AG04450 (cell line): ENCODE measurements at regions of chr4 and their contacts with region 1.

Region 1: DNA sequence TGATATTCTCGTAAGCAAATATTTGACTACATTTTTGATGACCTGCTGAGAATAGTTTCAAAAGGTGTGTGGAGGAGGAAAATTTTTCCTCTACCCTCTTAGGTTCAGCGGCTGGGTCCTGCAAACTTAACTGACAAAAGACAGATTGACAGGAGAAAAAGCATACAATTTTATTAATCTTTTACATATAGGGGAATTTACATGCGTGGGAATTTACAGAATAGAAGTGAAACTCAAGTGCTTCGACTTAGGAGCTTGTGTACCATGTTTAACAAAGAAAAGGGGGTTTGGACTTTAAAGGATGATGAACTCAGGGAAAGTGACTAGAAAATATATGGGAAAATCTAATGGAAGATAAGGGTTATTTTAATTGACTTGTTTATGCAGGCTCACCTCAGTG is 2.5 kb downstream of the HERC6 start:
- DNase-seq: no peak
- H3K4me3 ChIP-seq: no peak overlapping the region
- H3K27ac ChIP-seq: no peak overlapping the region
- H3K27me3 ChIP-seq: peaks cover 3% of the 10 kb centered on the region
- CTCF ChIP-seq: no peak

Region 2: DNA sequence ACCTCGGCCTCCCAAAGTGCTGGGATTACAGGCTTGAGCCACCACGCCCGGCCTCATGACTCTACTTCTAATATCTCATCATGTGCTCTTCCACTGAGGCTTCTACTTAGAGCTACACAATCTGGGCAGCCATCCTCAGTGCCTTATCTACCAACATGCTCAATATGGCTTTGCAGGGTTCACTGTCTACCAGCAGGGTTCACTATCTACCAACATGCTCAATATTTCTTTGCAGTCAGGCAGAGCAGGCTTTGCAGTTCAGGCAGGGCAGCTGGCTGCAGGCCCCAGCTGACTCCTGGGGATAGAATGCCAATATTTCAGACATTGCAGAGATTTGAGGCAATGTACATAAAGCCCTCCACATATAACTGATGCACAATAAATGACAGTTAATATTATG is 326.2 kb before region 1 on chr4:
- CTCF ChIA-PET with region 1: no interaction called
- POLR2A ChIA-PET with region 1: no interaction called
- DNase-seq: peak; percentile 38
- H3K4me3 ChIP-seq: no peak overlapping the region
- H3K27ac ChIP-seq: no peak overlapping the region
- H3K27me3 ChIP-seq: no peaks in the 10 kb centered on the region
- CTCF ChIP-seq: peak; percentile 76

Region 3: DNA sequence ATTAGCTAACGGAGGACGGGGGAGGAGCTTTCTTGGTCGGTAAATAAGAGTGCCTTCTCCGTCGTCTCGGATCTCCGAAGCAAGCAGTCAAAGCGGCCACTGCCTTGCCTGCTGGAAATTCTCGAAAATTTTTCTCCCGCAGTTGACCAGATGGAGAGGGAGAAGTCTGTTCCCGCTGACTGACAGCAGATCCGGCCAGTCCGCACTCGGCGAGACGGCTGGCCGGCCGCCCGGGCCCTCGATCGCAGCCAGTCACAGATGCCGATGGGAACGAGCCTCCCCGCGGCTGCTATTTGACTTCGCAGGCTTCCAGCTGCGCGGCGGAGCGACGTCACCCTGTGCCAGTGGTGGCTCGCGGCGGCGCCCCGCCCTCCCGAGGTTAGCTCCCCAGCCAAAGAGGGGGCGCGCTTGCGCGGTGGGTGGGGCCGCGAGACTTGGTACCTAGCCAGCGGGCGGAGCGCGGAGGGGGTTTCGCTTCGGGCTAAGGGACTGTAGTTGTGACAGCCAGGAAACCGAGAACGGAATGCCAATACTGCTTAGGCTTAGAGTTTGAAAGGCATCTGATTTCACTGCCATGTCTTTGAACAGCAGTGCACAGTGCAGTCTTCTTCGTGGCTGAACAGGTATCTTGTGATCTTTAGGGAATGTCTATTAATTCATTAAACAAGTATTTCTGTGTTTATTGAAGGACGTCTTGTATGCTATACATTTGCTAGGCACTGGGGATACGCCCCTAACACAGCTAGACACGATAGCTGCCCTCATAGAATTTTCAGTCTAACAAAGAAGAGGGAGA is 96.5 kb before region 1 on chr4 and contains the start of gene PPM1K:
- CTCF ChIA-PET with region 1: interaction called, 3 read pairs
- POLR2A ChIA-PET with region 1: interaction called, 16 read pairs
- DNase-seq: peak; percentile 97
- H3K4me3 ChIP-seq: peak within 1 kb of the TSS; percentile 90
- H3K27ac ChIP-seq: peak within 1 kb of the TSS; percentile 95
- H3K27me3 ChIP-seq: peaks cover 5% of the 10 kb centered on the region
- CTCF ChIP-seq: no peak; the same call in 1 of the 2 replicates
- polyA plus RNA-seq, gene PPM1K: 7.8 and 9.6 TPM in 2 replicates